HEK293 (cell line): ENCODE measurements at regions of chr9 and their contacts with region 1.

Region 1: GRCh38 chr9:91949946-91950664 is at the start of gene ROR2:
- H3K4me3 ChIP-seq: peak within 1 kb of the TSS; percentile 51
- H3K27ac ChIP-seq: peak within 1 kb of the TSS; percentile 72
- H3K4me1 ChIP-seq: peaks cover 11% of the 10 kb centered on the region
- CTCF ChIP-seq: peak; percentile 26; the same call in 1 of the 2 replicates

Region 2: GRCh38 chr9:91758491-91758981 is 191.6 kb before region 1 on chr9:
- CTCF ChIA-PET with region 1: interaction called, 22 read pairs
- POLR2A ChIA-PET with region 1: no interaction called
- H3K4me3 ChIP-seq: no peak overlapping the region
- H3K27ac ChIP-seq: no peak overlapping the region
- H3K4me1 ChIP-seq: no peaks in the 10 kb centered on the region
- CTCF ChIP-seq: no peak

Region 3: GRCh38 chr9:91803151-91803940 is 146.8 kb before region 1 on chr9:
- CTCF ChIA-PET with region 1: no interaction called
- POLR2A ChIA-PET with region 1: no interaction called
- H3K4me3 ChIP-seq: no peak overlapping the region
- H3K27ac ChIP-seq: no peak overlapping the region
- H3K4me1 ChIP-seq: no peaks in the 10 kb centered on the region
- CTCF ChIP-seq: no peak

Region 4: GRCh38 chr9:91908746-91909145 is 41.4 kb before region 1 on chr9:
- CTCF ChIA-PET with region 1: interaction called, 15 read pairs
- POLR2A ChIA-PET with region 1: no interaction called
- H3K4me3 ChIP-seq: no peak overlapping the region
- H3K27ac ChIP-seq: no peak overlapping the region
- H3K4me1 ChIP-seq: peaks cover 10% of the 10 kb centered on the region
- CTCF ChIP-seq: no peak

Region 5: DNA sequence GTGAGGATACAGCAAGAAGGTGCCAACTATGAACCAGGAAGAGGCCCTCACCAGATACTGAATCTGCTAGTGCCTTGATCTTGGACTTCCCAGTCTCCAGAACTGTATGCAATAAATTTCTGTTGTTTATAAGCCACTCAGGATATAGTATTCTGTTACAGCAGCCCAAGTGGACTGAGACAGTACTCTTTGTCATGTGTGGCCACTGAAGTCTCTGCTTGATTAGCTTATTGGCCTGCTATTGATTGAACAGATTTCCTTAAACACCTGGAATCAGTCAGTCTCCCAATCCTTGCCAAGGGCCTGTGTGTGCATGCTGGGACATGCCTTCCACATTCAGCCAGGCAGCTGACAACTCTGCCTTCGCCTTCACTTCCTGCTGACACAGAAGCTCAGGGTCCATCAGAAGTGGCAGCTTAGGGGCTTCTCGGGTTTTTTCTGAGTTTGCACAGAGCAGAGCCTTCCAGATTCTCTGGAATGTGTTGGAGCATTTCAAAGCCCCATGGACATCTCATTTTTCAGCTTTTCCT is 13.7 kb after region 1 on chr9:
- CTCF ChIA-PET with region 1: interaction called, 35 read pairs
- POLR2A ChIA-PET with region 1: no interaction called
- H3K4me3 ChIP-seq: no peak overlapping the region
- H3K27ac ChIP-seq: no peak overlapping the region
- H3K4me1 ChIP-seq: no peaks in the 10 kb centered on the region
- CTCF ChIP-seq: no peak